CD8-positive, alpha-beta T cell (primary cell): ENCODE measurements at regions of chr20 and their contacts with region 1.

Region 1: DNA sequence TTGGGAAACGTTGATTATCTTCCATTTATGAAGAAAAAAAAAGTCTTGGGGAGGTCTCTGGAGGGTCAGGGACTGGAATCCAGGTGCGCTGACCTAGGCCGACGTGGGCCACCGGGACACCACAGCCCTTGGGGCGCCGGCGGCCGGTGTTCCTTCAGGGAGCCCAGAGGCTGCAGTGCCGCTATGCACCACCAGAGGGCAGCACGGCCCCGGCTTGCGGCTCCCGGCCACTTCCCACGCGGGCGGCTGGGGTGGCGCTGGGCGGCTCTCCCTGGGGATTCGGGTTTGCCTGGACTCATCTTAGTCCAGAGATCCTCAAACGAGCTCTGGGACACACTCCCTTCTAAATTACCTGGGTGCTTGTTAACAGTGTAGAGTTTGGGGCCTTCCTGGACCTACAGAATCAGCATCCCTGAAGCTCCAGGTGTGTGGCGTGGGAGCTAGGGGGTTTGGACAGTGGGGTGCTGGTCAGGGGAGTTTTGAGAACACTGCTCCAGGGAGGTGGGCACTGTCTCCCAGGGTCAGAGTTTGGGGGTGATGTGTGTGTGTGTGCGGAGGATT is 23.0 kb upstream of the GTSF1L start:
- DNase-seq: peak; percentile 63 to 90 (median 78)
- ATAC-seq: peak; percentile 82
- H3K4me3 ChIP-seq: no peak overlapping the region
- H3K4me3 Mint-ChIP-seq: no peak overlapping the region
- H3K27ac ChIP-seq: no peak overlapping the region
- H3K27ac Mint-ChIP-seq: no peak overlapping the region
- H3K4me1 ChIP-seq: peaks cover 18% of the 10 kb centered on the region
- H3K4me1 Mint-ChIP-seq: peaks cover 30% of the 10 kb centered on the region
- H3K27me3 ChIP-seq: peaks cover 0 to 6% of the 10 kb centered on the region in 2 experiments
- H3K27me3 Mint-ChIP-seq: peaks cover 5% of the 10 kb centered on the region
- CTCF ChIP-seq: peak; percentile 99

Region 2: GRCh38 chr20:43721429-43722152 is 28.2 kb before region 1 on chr20:
- CTCF ChIA-PET with region 1: interaction called, 15 read pairs
- POLR2A ChIA-PET with region 1: no interaction called
- intact Hi-C with region 1: no loop called
- DNase-seq: no peak
- ATAC-seq: no peak
- H3K4me3 ChIP-seq: peak overlapping the region; percentile 20 to 31
- H3K4me3 Mint-ChIP-seq: peak overlapping the region; percentile 48
- H3K27ac ChIP-seq: no peak overlapping the region
- H3K27ac Mint-ChIP-seq: peak overlapping the region; percentile 76
- H3K4me1 ChIP-seq: peaks cover 61% of the 10 kb centered on the region
- H3K4me1 Mint-ChIP-seq: peaks cover 61% of the 10 kb centered on the region
- H3K27me3 ChIP-seq: no peaks in the 10 kb centered on the region
- H3K27me3 Mint-ChIP-seq: no peaks in the 10 kb centered on the region
- CTCF ChIP-seq: no peak

Region 3: GRCh38 chr20:43761386-43762340 is 11.8 kb after region 1 on chr20:
- CTCF ChIA-PET with region 1: interaction called, 10 read pairs
- POLR2A ChIA-PET with region 1: no interaction called
- intact Hi-C with region 1: no loop called
- DNase-seq: no peak
- ATAC-seq: no peak
- H3K4me3 ChIP-seq: no peak overlapping the region
- H3K4me3 Mint-ChIP-seq: no peak overlapping the region
- H3K27ac ChIP-seq: no peak overlapping the region
- H3K27ac Mint-ChIP-seq: no peak overlapping the region
- H3K4me1 ChIP-seq: no peaks in the 10 kb centered on the region
- H3K4me1 Mint-ChIP-seq: no peaks in the 10 kb centered on the region
- H3K27me3 ChIP-seq: no peaks in the 10 kb centered on the region
- H3K27me3 Mint-ChIP-seq: peaks cover 4% of the 10 kb centered on the region
- CTCF ChIP-seq: no peak

Region 4: DNA sequence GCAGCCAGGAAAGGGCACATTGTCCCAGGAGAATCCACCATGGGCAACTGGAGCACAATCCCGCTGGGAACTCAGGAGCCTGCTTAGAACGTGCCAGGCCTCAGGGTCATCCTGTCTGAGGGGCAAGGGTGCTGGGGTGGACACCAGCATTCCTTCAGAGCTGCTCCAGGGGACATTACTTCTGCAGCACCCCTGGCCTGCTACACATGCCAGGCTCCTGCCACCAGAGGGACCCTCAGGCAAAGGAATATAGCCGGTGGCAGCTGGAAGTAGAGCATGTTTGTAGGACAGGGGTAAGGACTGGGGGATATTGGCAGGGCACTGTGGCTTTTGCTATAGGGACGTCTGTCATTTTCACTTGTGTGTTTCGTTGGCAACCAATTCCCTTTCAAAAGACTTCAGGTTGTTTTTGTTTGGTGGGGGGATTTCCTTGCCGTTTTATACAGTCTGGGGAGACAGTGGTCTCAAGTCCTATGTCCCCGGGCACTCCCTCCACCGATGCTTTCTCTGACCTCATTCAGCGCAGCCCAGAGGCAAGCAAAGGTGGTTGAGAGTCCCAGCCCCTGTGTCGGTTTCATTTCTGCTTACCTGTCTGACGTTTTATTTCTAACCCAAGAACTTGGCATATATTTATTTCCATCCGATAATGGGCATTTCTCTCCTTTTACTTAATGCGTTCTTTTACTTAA is 306.3 kb after region 1 on chr20:
- CTCF ChIA-PET with region 1: interaction called, 16 read pairs
- POLR2A ChIA-PET with region 1: no interaction called
- intact Hi-C with region 1: loop called in 1 of 2 experiments (anchors 1 kb)
- DNase-seq: peak; percentile 47 to 82 (median 70)
- ATAC-seq: peak; percentile 98
- H3K4me3 ChIP-seq: no peak overlapping the region
- H3K4me3 Mint-ChIP-seq: no peak overlapping the region
- H3K27ac ChIP-seq: no peak overlapping the region
- H3K27ac Mint-ChIP-seq: peak overlapping the region; percentile 28
- H3K4me1 ChIP-seq: peaks cover 4% of the 10 kb centered on the region
- H3K4me1 Mint-ChIP-seq: peaks cover 23% of the 10 kb centered on the region
- H3K27me3 ChIP-seq: no peaks in the 10 kb centered on the region
- H3K27me3 Mint-ChIP-seq: peaks cover 2% of the 10 kb centered on the region
- CTCF ChIP-seq: peak; percentile 61

Region 5: GRCh38 chr20:44092551-44093248 is 342.9 kb after region 1 on chr20:
- CTCF ChIA-PET with region 1: interaction called, 13 read pairs
- POLR2A ChIA-PET with region 1: no interaction called
- intact Hi-C with region 1: loop called in 1 of 2 experiments (anchors 1 kb)
- DNase-seq: peak in 4 of 9 experiments; percentile 32 to 55 (median 42)
- ATAC-seq: no peak
- H3K4me3 ChIP-seq: no peak overlapping the region
- H3K4me3 Mint-ChIP-seq: no peak overlapping the region
- H3K27ac ChIP-seq: no peak overlapping the region
- H3K27ac Mint-ChIP-seq: no peak overlapping the region
- H3K4me1 ChIP-seq: no peaks in the 10 kb centered on the region
- H3K4me1 Mint-ChIP-seq: no peaks in the 10 kb centered on the region
- H3K27me3 ChIP-seq: no peaks in the 10 kb centered on the region
- H3K27me3 Mint-ChIP-seq: peaks cover 17% of the 10 kb centered on the region
- CTCF ChIP-seq: peak; percentile 49